Activated CD4-positive, alpha-beta T cell treated with anti-CD3 and anti-CD28 coated beads, Interleukin-2, amount 10 ng/mL, durations not matched to agents 24 days and 14 days (primary cell): ENCODE measurements at regions of chr10 and their contacts with region 1.

Region 1: DNA sequence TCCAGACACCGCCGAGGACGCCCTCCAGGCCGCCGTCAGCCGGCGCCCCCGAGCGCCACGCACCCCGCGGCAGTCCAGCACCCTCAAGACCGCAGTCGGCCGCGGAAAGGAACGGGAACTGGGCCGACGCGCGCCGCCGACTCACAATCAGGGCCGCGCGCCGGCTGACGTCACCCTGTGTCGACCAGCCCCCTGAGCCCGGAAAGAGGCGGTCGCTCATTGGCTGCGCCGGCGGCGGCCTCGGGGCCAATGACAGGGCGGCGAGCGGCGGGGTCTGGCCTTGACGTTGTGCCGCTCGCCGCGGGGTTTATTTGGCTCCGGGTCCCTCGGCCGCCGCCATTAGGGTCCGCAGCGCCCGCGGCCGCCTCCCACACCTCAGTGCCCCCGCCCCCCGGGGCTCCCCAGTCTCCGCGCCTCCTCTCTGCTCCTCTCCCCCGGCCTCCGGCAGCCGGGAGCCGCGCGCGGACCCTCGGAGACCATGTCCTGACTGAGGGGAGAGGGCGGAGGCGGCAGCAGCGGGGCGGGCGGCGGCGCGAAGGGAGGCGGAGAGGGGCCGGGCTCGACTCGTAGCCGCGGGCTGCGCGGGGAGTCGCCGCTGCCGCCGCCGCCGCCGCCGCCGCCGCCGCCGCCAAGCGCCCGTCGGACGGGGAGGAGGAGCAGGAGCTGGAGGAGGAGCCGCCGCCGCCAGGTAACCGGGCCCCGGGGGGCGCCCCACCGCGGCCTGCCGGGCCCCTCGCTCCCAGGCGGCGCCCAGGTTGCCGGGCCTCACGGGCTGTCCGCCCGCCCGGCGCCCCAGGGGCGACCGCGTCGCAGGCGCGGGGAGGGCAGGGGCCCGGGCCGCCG is 25.1 kb upstream of the ZRANB1 start:
- DNase-seq: peak; percentile 99
- H3K4me3 Mint-ChIP-seq: peak overlapping the region; percentile 94
- H3K27ac Mint-ChIP-seq: peak overlapping the region; percentile 95
- H3K4me1 Mint-ChIP-seq: peaks cover 29% of the 10 kb centered on the region
- H3K27me3 Mint-ChIP-seq: peaks cover 8% of the 10 kb centered on the region

Region 2: GRCh38 chr10:124418726-124419501 is 497.9 kb before region 1 on chr10 and contains the start of gene OAT:
- intact Hi-C with region 1: loop called (anchors 5 kb)
- DNase-seq: peak; percentile 99
- H3K4me3 Mint-ChIP-seq: peak within 1 kb of the TSS; percentile 83
- H3K27ac Mint-ChIP-seq: peak within 1 kb of the TSS; percentile 65
- H3K4me1 Mint-ChIP-seq: peaks cover 9% of the 10 kb centered on the region
- H3K27me3 Mint-ChIP-seq: peaks cover 12% of the 10 kb centered on the region
- total RNA-seq, gene OAT: 40.2 and 41.0 TPM in 2 replicates

Region 3: DNA sequence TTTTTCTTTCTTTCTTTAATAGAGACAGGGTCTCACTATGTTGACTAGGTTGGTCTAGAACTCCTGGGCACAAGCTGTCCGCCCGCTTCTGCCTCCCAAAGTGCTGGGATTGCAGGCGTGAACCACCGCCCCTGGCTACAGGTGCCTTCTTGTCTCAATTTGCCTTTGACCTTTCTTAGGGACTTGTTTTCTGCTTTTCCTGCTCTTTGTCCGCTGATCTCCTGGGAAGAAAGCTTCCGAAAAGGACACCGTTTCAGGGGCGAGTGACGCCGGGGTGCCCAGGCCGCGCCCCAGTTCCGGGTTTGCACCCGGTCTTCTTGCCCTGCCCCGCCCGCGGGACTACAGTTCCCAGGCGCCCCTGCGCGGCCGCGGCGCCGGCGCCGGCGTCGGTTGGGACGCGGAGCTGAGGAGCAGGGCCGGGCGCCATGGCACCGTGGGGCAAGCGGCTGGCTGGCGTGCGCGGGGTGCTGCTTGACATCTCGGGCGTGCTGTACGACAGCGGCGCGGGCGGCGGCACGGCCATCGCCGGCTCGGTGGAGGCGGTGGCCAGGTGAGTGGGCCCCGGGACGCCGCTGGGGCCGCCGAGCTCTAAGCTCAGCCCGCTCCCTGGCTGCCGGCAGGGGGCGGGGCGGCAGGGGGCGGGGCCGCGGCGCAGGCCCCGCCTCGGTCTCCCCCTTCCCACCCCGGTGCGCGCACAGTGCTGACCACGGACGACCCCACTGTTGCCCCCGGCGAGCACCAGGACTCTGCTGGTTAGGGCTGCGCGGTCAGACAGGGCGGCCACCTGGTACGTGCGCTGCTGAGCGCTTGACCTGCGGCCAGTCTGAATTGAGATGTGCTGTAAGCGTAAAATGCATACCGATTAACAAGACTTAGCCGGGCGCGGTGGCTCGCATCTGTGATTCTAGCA is 455.1 kb before region 1 on chr10 and contains the start of gene LHPP:
- intact Hi-C with region 1: loop called (anchors 5 kb)
- DNase-seq: peak; percentile 97
- H3K4me3 Mint-ChIP-seq: peak within 1 kb of the TSS; percentile 77
- H3K27ac Mint-ChIP-seq: peak within 1 kb of the TSS; percentile 92
- H3K4me1 Mint-ChIP-seq: peaks cover 24% of the 10 kb centered on the region
- H3K27me3 Mint-ChIP-seq: peaks cover 11% of the 10 kb centered on the region
- total RNA-seq, gene LHPP: 8.1 and 8.6 TPM in 2 replicates

Region 4: DNA sequence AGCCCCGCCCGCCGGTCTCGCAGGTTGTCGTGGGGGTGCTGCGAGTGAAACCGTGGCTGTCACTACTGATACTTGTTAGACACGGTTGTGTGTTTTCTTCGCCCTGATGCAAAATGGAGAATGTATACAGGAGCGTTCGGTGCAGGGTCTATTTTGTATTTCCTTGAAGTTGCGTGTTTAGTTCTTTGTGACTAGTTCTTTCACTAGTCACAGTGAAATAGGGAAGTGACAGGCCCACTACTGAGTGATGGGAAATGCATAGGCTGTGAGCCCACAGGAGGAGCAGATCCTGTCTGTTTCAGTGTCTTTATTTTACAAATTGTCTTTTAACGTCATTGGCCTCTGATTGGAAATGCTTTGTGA is 114.5 kb before region 1 on chr10:
- intact Hi-C with region 1: loop called (anchors 1 kb)
- DNase-seq: peak; percentile 74
- H3K4me3 Mint-ChIP-seq: peak overlapping the region; percentile 95
- H3K27ac Mint-ChIP-seq: peak overlapping the region; percentile 89
- H3K4me1 Mint-ChIP-seq: peaks cover 14% of the 10 kb centered on the region
- H3K27me3 Mint-ChIP-seq: peaks cover 8% of the 10 kb centered on the region

Region 5: GRCh38 chr10:125719146-125720001 is 802.6 kb after region 1 on chr10 and contains the start of gene EDRF1:
- intact Hi-C with region 1: loop called (anchors 2 kb)
- DNase-seq: peak; percentile 100
- H3K4me3 Mint-ChIP-seq: peak within 1 kb of the TSS; percentile 98
- H3K27ac Mint-ChIP-seq: peak within 1 kb of the TSS; percentile 96
- H3K4me1 Mint-ChIP-seq: peaks cover 18% of the 10 kb centered on the region
- H3K27me3 Mint-ChIP-seq: no peaks in the 10 kb centered on the region
- total RNA-seq, gene EDRF1: 40.8 and 43.2 TPM in 2 replicates

Region 6: DNA sequence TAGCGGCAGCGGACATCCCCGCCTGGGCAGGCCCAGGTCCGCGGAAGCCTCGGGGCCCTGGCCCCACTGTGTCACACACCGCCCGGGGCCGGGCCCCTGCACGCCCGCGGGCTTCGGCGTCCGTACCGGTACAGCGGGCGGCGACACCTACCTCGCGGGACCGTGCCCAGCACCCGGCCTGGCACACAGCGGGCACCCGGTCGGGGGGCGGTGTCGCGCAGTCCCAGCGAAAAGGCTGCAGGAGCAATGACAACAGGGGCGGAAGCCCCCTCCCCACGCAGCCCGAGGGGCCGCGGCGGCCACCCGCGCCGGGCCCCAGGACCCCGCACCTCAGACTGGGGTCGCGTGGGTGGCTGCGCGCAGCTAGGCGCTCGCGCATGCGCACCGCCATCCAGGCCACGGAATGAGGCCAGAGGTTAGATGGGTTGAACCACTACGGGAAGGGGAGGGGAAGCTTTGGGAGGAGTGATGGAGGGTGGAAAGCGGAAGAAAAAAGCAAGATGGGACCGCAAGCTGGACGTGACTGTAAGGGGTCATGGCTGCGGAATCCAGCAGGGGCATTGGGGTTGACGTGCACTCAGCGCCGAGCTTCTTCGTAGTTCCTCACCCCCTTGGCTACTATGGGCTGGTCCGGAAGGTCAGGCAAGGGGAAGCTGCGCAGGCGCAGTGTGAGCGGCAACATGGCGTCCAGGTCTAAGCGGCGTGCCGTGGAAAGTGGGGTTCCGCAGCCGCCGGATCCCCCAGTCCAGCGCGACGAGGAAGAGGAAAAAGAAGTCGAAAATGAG is 906.3 kb after region 1 on chr10 and contains the starts of genes BCCIP and UROS:
- intact Hi-C with region 1: loop called (anchors 5 kb)
- DNase-seq: peak; percentile 97
- H3K4me3 Mint-ChIP-seq: no peak within 1 kb of the TSS
- H3K27ac Mint-ChIP-seq: peak within 1 kb of the TSS; percentile 50
- H3K4me1 Mint-ChIP-seq: peaks cover 20% of the 10 kb centered on the region
- H3K27me3 Mint-ChIP-seq: no peaks in the 10 kb centered on the region
- total RNA-seq, gene BCCIP: 135 and 143 TPM in 2 replicates
- total RNA-seq, gene UROS: 50.6 and 53.8 TPM in 2 replicates